OCI-LY7 (cell line): ENCODE measurements at regions of chr11 and their contacts with region 1.

Region 1: GRCh38 chr11:61654397-61654829 is 25.8 kb upstream of the DAGLA start:
- DNase-seq: no peak
- H3K4me3 ChIP-seq: no peak overlapping the region
- H3K27ac ChIP-seq: no peak overlapping the region
- H3K4me1 ChIP-seq: no peaks in the 10 kb centered on the region
- CTCF ChIP-seq: no peak

Region 2: GRCh38 chr11:61555051-61555969 is 99.1 kb before region 1 on chr11:
- CTCF ChIA-PET with region 1: interaction called, 10 read pairs
- POLR2A ChIA-PET with region 1: no interaction called
- intact Hi-C with region 1: no loop called
- DNase-seq: no peak
- H3K4me3 ChIP-seq: no peak overlapping the region
- H3K27ac ChIP-seq: no peak overlapping the region
- H3K4me1 ChIP-seq: no peaks in the 10 kb centered on the region
- CTCF ChIP-seq: no peak